ENCODE measurements at regions of chr1 and their contacts with region 1.

Region 1: DNA sequence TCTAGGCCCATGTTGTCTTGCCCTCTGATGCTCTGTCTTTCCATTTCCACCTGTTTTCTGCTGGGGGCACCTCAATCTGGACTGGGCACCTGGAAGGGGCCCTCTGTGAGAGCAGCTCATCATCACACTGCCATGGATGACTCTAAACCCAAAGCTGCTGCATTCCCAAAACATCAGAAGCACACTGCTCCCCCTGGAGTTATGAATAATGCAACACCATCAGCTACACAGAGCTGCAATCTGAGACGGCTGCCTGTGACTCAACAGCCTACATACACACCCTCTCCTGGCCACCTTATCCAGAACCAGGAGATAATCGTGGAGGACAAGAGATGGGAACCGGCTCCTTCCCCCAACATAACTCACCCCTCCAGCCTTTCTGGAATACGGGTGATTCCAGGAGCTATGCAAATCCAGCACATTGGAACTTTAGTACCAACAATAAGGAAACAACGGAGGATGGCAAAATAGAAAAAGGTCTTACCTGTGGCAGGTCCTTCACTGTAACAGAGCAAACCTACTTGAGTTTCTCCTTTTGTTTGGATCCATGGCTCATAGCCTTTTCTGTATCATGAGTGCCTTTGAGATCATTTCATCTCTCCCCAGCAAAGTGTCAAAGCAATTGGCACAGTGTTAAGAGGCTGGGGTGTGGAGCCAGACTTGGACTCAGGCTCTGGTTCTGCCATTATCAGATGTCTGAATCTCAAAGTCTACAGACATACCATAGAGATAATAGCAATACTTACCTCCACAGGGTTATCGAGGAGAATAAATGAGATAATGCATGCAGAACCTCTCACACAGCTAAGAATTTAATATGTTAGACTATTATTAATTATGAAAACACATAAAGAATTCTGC is 29.3 kb downstream of the AK2 start:
- DNase-seq: peak; percentile 79
- H3K4me3 ChIP-seq: no peak overlapping the region
- H3K27ac ChIP-seq: no peak overlapping the region
- H3K27me3 ChIP-seq: no peaks in the 10 kb centered on the region
- CTCF ChIP-seq: peak; percentile 80

Region 2: DNA sequence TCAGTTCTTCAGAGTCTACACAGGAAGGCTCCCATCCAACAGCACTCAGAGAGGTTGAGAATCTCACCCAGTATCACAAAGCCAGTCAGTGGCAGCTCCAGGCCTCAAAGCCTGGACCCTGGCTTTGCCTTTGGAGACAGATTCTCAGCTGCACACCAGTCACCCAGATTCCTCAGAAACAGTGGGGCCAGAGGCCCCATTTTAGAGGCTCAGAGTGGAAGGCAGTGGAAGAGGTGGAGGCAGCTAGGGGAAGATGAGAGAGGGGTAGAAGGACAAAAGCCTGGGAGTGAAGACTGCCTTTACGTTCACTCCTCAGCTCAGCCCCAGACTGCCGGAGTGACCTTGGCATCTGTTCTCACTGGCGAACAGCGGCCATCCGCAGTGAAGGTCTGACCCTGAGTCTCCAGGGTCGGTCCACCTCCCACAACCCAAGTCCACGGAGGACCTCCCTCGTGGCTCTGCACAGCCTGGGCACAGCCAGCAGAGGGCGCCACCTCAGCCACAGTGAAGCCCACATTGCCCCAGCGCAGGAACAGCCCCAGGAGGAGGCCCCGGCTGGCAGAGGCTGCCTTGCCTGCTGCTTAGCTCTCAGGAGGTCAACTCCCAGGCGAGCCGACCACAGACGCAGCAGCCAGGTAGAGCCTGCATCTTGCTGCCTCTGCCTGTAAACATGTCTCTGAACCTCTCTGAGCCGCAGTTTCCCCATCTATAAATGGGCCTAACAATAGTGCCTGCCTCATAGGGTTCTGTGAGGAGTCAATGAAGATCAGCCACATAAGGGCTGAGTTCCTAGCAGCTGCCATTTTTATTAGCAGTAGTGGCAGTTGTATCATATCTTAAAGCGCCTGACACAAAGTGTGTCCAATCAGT is 130.8 kb before region 1 on chr1:
- CTCF ChIA-PET with region 1: interaction called, 16 read pairs
- POLR2A ChIA-PET with region 1: no interaction called
- DNase-seq: no peak
- H3K4me3 ChIP-seq: no peak overlapping the region
- H3K27ac ChIP-seq: no peak overlapping the region
- H3K27me3 ChIP-seq: peaks cover 3% of the 10 kb centered on the region
- CTCF ChIP-seq: peak; percentile 78

Region 3: DNA sequence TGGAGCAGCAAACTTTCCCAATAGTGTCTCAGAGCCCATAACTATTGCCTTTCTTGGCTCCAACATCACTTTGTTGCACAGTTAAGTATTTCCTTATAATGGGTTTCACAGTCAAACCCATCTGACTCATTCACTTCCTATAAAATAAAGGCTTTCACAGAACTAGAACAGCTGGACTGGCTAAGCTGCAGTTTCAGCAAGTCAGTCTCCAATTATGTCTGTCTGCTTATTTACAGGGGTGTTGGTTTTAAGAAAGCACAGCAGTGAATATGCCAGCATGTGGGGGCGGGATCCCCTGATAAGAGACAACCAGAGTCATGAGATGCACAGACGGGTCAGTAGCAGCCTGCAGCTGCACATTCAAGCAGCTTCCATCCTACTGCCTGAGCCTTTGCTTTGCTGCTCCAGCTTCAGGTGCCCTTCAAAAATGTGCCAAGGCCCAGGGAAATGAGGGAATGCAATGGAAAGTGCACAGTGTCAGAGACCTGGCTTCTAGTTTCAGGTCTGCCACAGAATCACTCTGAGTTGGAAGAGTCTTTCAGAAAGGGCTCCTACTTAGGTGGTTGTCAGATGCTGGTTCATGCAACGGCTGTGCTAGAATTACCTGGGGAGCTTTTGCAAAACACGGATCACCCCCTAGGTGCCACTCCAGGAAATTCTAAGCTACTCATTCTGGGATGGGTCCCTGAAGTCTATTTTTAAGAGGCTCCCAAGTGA is 67.6 kb before region 1 on chr1:
- CTCF ChIA-PET with region 1: interaction called, 155 read pairs
- POLR2A ChIA-PET with region 1: no interaction called
- DNase-seq: peak; percentile 80
- H3K4me3 ChIP-seq: no peak overlapping the region
- H3K27ac ChIP-seq: peak overlapping the region; percentile 40
- H3K27me3 ChIP-seq: no peaks in the 10 kb centered on the region
- CTCF ChIP-seq: no peak

Region 4: DNA sequence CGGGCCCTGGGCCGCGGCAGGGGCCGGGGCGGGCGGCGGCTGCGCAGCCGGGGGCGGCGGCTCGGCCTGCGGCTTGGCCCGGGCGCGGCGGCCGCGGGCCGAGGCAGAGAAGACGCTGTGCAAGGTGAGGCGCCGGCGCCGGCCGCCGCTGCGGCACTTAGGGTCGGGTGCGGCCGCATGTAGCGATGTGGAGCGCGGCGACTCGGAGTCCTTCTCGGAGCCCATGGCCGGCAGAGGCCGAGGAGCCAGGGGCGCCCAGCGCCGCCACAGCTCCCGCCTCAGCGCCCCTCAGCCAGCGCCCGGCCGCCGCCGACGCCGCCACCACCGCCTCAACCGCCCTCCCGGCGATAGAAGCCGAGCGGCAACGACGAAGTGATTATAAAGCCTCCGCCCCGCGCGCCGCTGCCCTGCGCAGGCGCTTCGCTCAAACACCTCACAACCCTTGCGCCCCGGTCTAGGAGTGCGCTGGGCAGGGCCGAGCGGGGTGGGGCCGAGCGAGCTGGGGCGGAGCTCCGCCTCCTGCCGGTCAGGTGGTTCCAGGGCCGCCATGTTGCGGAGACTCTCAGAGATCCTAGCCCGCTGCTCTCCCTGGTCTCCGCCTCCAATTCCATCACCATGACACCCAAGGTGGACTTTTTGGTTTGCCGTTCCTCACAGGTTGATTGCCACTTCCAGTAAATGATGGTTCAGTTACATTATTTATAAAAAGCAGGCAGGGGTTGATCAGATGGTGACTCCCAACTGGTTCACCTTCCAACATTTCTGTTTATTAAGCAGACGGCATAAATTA is 42.8 kb before region 1 on chr1 and contains the start of gene RNF19B:
- CTCF ChIA-PET with region 1: interaction called, 10 read pairs
- POLR2A ChIA-PET with region 1: interaction called, 11 read pairs
- DNase-seq: peak; percentile 71
- H3K4me3 ChIP-seq: peak within 1 kb of the TSS; percentile 84
- H3K27ac ChIP-seq: peak within 1 kb of the TSS; percentile 25
- H3K27me3 ChIP-seq: no peaks in the 10 kb centered on the region
- CTCF ChIP-seq: no peak
- polyA plus RNA-seq, gene RNF19B: 8.5 and 10.1 TPM in 2 replicates

Region 5: GRCh38 chr1:32992489-32993323 is 14.7 kb before region 1 on chr1:
- CTCF ChIA-PET with region 1: interaction called, 14 read pairs
- POLR2A ChIA-PET with region 1: interaction called, 3 read pairs
- DNase-seq: no peak
- H3K4me3 ChIP-seq: no peak overlapping the region
- H3K27ac ChIP-seq: peak overlapping the region; percentile 77
- H3K27me3 ChIP-seq: no peaks in the 10 kb centered on the region
- CTCF ChIP-seq: no peak

Region 6: GRCh38 chr1:33022650-33023200 is 15.3 kb after region 1 on chr1:
- CTCF ChIA-PET with region 1: interaction called, 11 read pairs
- POLR2A ChIA-PET with region 1: no interaction called
- DNase-seq: no peak
- H3K4me3 ChIP-seq: no peak overlapping the region
- H3K27ac ChIP-seq: no peak overlapping the region
- H3K27me3 ChIP-seq: no peaks in the 10 kb centered on the region
- CTCF ChIP-seq: no peak

Region 7: DNA sequence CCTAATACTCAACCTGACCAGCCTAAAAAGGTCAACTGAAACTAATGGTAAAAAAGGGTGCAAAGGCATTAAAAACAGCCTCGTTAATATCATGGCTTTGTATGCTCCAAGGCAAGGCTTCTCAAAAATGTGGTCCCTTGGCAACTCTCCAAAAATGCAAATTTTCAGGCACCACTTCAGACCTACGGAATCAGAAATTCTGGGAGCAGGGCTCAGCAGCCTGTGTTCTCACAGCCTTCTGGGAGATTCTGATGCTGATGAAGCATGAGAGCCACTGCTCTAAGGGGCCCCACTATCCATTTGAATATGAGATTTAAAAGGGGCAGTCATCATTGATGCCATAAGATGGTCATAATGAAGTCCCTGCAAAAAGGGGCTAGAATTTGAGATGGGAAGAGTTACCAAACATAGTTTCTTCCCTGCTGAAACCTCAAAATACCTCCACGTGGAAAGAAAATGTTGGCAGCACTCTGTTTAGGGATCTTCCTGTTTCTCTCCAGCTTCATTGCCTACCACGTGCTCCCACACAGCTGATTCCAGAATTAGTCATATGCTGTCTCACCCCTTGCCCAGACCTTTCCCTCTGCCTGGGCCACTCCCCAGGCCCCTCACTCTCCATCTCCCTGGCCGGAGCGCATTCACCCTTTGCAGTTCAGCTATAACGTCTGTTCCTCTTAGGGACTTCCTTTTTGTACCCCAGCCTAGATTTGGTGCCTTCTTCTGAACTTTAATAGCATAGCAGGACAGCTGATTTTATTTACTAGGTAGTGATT is 376.8 kb after region 1 on chr1:
- CTCF ChIA-PET with region 1: no interaction called
- POLR2A ChIA-PET with region 1: no interaction called
- DNase-seq: no peak
- H3K4me3 ChIP-seq: no peak overlapping the region
- H3K27ac ChIP-seq: peak overlapping the region; percentile 67
- H3K27me3 ChIP-seq: no peaks in the 10 kb centered on the region
- CTCF ChIP-seq: no peak